Posterior vena cava (tissue), 2 donors: ENCODE measurements at regions of chr9 and their contacts with region 1.

Region 1: GRCh38 chr9:102922526-102922925 is 72.6 kb upstream of the CYLC2 start:
- DNase-seq: no peak

Region 2: DNA sequence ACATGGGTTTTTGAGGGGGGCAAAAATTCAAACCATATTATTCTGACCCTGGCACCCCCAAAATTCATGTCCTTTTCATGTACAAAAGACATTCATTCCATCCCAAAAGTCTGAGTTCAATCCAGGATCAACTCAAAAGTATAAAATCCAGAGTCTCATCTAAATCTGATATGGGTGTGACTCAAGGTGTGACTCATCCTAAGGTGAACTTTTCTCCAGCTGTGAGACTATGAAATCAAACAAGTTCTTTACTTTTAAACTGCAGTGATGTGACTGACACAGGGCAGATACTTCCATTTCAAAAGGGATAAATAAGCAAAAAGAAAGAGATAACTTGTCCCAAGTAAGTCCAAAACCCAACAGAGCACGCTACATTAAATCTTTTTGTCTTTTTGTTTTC is 52.0 kb after region 1 on chr9:
- intact Hi-C with region 1: loop called in 1 of 2 experiments (anchors 2 kb)
- DNase-seq: no peak

Region 3: GRCh38 chr9:103003689-103004088 is 81.2 kb after region 1 on chr9:
- intact Hi-C with region 1: no loop called
- DNase-seq: no peak

Region 4: DNA sequence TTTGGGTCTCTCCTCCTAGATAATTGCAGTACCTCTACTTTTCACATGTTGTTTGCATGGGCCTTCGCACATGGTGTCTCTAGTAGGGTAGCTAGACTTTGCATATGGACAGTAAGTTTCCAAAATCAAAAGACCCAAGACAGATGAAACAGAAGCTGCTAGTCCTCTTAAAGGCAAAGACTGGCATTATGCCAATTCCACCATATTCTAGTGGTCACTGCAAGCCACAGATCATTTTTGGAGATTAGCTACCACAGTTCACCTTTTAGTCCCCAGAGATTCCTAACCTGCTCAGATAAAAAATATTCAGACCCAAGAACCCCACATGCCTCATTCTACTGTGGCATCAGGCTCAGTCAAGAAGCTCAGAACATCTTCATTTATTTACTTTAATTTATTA is 579.5 kb after region 1 on chr9:
- intact Hi-C with region 1: no loop called
- DNase-seq: no peak

Region 5: GRCh38 chr9:103545260-103545659 is 622.7 kb after region 1 on chr9:
- intact Hi-C with region 1: no loop called
- DNase-seq: no peak